Gastrocnemius medialis (tissue), 4 donors: ENCODE measurements at regions of chr1 and their contacts with region 1.

Region 1: DNA sequence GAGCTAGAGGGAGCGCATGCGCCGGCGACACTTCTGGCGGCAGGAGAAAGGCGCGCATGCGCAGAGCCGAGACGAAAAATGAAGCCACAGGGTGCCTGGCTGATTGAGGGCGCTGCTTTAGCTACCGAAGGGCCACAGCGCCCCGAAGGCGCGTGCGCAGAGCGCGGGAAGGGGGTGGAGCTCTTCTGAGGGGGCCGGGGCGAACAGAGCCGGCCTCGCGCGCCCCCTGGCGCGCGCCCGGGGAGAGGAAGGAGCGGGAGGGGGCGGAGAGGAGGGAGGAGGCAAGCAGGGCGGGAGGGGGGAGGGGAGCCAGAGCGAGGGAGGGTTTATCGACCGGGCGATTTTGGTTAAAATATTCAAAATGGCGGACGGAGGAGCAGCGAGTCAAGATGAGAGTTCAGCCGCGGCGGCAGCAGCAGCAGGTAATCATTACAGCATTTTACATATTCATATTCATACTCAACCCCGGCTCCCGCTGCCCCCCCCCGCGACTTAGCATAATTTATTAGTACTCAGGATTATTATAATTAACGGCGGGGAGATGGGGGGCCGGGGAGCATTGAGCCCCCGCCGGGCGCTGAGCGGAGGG is at the start of gene POU2F1:
- DNase-seq: peak; percentile 97 to 98
- ATAC-seq: peak; percentile 70 to 82
- H3K4me3 ChIP-seq: peak within 1 kb of the TSS; percentile 77 to 89 (median 84)
- H3K27ac ChIP-seq: peak within 1 kb of the TSS; percentile 94 to 99 (median 98)
- H3K4me1 ChIP-seq: peaks cover 36 to 42% of the 10 kb centered on the region in 2 donors
- H3K27me3 ChIP-seq: no peaks in the 10 kb centered on the region
- CTCF ChIP-seq: peak; percentile 19 to 85 (median 70)
- POLR2A ChIP-seq: peak; percentile 67 to 84
- total RNA-seq, gene POU2F1: 3.8 to 7.3 (median 4.8) TPM

Region 2: DNA sequence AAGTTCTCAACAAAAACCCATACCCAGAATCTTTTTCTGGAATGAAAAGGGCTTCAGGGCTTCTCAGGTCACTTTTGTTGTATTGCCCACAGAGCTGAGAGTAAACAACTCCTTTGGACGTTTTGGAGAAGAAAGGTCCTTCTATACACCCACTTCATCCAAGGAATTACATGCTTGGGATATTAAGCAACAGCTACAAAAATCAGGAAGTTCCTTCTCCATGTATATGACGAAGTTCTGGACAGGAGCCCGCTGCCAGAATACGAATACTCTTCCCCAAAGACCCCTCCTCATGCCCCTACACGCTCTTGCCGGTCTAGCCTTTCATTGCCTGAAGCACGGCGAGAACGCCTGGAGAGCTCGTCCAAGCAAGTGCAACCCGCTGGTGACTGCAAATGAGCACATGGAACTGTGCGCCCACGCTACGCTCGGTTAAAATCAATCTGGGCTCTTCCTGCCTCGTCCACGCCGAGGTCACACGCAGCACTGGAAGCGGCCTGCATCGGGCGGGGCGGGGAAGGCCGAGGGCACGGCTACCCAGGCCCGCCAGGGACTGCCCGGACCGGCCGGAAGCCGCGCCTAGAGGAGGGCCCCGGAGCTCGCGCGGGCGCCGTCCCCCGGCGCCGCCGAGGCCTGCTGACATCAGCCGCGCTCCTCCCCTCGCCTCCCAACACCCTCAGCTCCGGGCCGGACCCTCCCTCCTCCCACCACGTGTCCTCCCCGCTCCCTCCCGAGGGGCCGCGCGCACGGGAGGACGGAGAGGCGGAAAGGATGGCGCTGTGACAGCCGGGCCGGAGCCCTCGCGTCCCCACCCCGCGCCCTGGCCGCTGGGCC is 381.6 kb before region 1 on chr1 and contains the start of gene POGK:
- in situ Hi-C with region 1: no loop called
- intact Hi-C with region 1: loop called (anchors 1 kb)
- DNase-seq: peak; percentile 88 to 91
- ATAC-seq: peak; percentile 86 to 90
- H3K4me3 ChIP-seq: peak within 1 kb of the TSS; percentile 63 to 84 (median 68)
- H3K27ac ChIP-seq: peak within 1 kb of the TSS; percentile 83 to 99 (median 89)
- H3K4me1 ChIP-seq: peaks cover 49 to 50% of the 10 kb centered on the region in 2 donors
- H3K27me3 ChIP-seq: no peaks in the 10 kb centered on the region
- CTCF ChIP-seq: no peak
- POLR2A ChIP-seq: peak; percentile 78 to 84
- total RNA-seq, gene POGK: 6.6 to 9.6 (median 9.0) TPM

Region 3: DNA sequence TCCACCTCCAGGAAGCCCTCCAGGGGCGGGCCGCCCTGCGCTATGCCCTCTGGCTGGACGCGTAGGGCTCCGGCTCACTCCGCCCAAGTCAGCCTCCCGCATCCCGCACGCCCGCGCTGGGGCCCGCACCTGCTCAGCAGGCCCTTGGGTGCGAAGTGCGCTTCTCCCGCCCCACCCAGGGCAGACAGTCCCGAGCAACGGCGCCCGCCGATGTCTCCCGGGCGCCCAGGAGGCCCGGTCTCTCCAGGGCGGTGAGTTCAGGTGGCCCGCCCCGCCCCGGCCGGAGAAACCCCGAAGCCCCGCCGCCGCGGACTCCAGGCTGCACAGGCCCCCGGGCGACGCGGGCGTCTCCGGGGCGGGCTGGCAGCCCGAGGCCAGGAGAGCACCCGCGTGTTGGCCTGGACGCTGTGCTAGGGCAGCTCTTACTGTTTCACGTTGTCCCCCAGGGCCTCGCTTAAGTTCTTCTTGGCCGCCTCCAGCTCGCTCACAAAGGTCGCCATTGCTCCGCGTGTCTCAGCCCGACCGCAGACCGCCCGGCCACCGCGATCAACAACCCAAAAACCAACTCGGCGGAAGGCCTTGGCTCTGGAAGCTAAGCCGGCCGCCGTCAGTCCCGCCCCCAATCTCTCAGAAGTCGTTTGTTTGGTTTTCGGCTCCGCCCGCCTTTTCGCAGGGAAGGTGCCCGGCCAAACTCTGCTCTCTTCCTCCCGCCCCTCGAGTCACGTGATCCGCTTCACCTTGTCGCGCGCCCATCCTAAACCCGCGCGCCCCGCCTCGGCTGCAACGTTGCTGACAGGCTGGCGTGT is 344.7 kb before region 1 on chr1 and contains the start of gene TADA1:
- in situ Hi-C with region 1: no loop called
- intact Hi-C with region 1: loop called (anchors 2 kb)
- DNase-seq: peak; percentile 98 to 99
- ATAC-seq: peak; percentile 95 to 97
- H3K4me3 ChIP-seq: peak within 1 kb of the TSS; percentile 58 to 81 (median 74)
- H3K27ac ChIP-seq: peak within 1 kb of the TSS; percentile 84 to 94 (median 92)
- H3K4me1 ChIP-seq: peaks cover 12 to 33% of the 10 kb centered on the region in 2 donors
- H3K27me3 ChIP-seq: no peaks in the 10 kb centered on the region
- CTCF ChIP-seq: peak in 4 of 5 experiments; percentile 34 to 53 (median 48)
- POLR2A ChIP-seq: peak; percentile 70 to 88
- total RNA-seq, gene TADA1: 8.7 to 11.8 (median 10.0) TPM

Region 4: DNA sequence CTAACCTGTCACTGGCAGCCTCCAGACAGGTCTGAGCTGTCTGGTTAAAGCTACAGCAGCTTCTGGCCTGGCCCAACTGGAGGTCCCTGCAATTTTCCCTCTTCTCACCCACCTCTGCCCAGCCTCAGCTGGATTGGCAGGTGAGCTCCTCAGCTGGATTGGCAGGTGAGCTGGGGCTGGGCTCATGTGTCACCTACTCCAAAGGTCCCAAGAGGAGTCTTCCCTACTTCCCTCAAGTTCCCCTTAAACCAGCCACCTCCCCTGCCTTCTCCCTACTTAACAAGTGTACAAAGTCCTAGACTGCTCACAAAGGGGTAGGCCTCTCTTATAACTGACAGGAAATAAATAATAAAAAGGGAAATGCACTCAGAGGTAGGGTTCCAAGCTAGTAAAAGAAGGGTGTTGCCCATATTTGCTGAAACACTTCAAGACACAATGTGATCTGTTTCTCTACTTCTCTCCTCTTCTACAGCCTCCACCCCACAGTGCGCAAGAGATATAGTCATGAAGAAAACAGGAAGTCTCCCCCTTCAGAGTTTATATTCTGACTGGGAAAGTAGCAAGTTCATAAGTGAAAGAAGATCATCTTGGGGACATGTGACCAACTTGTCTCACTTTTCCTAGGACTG is 130.2 kb before region 1 on chr1 and contains the start of gene GPA33:
- in situ Hi-C with region 1: no loop called
- intact Hi-C with region 1: loop called (anchors 2 kb)
- DNase-seq: no peak
- ATAC-seq: no peak
- H3K4me3 ChIP-seq: no peak within 1 kb of the TSS
- H3K27ac ChIP-seq: peak within 1 kb of the TSS; percentile 21 to 48 (median 34)
- H3K4me1 ChIP-seq: peaks cover 31 to 49% of the 10 kb centered on the region in 2 donors
- H3K27me3 ChIP-seq: no peaks in the 10 kb centered on the region
- CTCF ChIP-seq: no peak
- POLR2A ChIP-seq: no peak
- total RNA-seq, gene GPA33: 1.9 TPM in 1 of 4 donors, not detected in the others

Region 5: DNA sequence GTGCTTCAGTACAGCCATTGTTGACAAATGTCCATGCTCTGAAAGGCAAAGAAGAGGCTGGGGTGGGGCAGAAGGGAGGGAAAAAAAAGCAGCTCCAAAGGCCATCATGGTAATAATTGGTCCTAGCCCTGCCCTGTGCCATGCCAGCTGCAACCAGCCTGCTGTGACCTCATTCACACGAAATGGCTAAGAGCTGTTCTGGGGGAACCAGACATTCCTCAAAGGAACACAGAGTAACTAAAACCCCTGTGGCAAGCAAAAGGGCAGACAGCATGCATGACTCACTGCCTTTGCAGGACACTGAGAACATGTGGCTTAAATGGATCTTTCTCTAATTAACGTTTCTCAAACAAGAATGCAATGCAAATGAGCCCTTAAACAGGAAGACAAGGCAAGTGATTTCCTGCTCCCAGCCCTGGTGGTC is 84.4 kb before region 1 on chr1:
- in situ Hi-C with region 1: no loop called
- intact Hi-C with region 1: loop called (anchors 2 kb)
- DNase-seq: peak; percentile 81 to 87
- ATAC-seq: peak; percentile 92 to 96
- H3K4me3 ChIP-seq: no peak overlapping the region
- H3K27ac ChIP-seq: peak overlapping the region; percentile 68 to 88 (median 80)
- H3K4me1 ChIP-seq: peaks cover 21 to 59% of the 10 kb centered on the region in 2 donors
- H3K27me3 ChIP-seq: no peaks in the 10 kb centered on the region
- CTCF ChIP-seq: no peak
- POLR2A ChIP-seq: no peak

Region 6: DNA sequence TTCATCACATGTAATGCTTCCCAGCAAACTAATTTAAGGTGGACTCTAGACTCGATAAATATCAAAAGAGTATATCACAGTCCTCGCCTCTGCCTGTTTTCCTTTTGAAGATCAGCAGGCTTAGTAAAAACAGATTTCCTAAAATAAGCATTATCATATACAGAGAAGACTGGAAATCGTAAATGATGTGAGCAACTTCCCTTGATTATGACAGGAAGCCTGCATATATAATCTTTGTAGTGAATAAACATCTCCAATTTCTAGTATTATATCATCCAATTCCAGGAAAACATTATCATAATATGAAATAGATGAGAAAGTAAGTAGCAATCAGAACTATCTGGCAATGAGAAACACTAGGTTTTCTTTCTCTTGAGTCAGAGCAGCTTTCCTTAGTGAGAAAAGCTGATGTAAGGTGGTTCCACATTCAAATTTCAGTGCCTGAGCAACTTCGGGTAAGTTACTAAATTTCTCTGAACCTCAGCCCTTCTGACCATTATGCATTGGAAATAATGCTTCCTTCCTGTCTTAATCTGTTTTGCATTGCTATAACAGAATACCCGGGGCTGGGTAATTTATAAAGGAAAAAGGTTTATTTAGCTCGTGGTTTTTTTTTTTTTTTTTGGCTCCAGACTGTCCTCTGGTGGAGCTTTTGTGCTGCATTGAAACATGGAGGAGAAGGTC is 12.5 kb before region 1 on chr1:
- in situ Hi-C with region 1: no loop called
- intact Hi-C with region 1: no loop called
- DNase-seq: no peak
- ATAC-seq: peak in 1 of 2 donors; percentile 41
- H3K4me3 ChIP-seq: no peak overlapping the region
- H3K27ac ChIP-seq: no peak overlapping the region
- H3K4me1 ChIP-seq: no peaks in the 10 kb centered on the region
- H3K27me3 ChIP-seq: no peaks in the 10 kb centered on the region
- CTCF ChIP-seq: peak in 3 of 5 experiments; percentile 32 to 39 (median 39)
- POLR2A ChIP-seq: no peak

Region 7: GRCh38 chr1:167491586-167492461 is 271.2 kb after region 1 on chr1:
- in situ Hi-C with region 1: no loop called
- intact Hi-C with region 1: no loop called
- DNase-seq: no peak
- ATAC-seq: no peak
- H3K4me3 ChIP-seq: no peak overlapping the region
- H3K27ac ChIP-seq: no peak overlapping the region
- H3K4me1 ChIP-seq: no peaks in the 10 kb centered on the region
- H3K27me3 ChIP-seq: no peaks in the 10 kb centered on the region
- CTCF ChIP-seq: no peak
- POLR2A ChIP-seq: no peak

Region 8: DNA sequence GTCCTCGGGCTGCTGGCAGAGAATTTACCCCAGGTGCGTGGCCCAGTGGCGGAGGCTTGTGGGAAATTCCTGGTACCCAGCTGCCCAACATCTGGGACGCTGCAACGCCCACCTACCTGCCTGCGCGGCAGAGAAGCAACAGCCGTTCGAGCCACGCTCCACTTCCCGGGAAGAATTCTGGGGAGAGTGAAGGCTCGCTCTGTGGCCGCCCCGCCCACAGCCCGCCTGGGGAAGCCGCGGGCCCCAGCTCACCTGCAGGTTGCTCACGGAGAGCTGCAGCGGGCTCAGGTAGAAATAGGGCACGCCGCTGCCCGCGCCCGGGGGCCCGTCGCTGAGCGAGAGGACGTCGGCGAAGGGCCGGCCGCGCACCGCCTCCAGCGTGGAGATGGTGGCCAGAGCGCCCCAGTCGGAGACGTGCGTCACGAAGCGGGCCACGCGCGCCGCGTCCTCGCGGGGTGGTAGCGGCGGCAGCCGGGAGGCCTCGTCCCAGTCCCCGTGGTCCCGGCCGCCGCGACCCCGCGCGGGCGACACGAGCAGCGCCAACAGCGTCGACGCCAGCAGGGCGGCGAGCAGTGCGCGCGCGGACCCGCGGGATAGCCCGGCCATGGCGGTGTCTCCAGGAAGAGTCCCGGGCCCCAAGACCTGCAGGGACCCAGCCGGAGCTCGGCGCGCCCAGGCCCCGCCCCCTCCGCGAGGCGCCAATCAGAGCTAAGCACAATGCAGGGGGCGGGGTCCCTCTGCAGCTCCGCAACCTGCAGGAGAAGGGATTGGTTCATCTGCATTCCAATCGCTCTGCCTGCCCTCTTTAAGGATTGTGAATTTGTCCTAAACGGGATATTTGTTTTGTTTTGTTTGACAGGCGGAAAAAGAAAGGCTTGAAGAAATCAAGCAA is 332.8 kb after region 1 on chr1 and contains the start of gene CREG1:
- in situ Hi-C with region 1: no loop called
- intact Hi-C with region 1: loop called (anchors 2 kb)
- DNase-seq: peak; percentile 90 to 94
- ATAC-seq: peak; percentile 88 to 91
- H3K4me3 ChIP-seq: peak within 1 kb of the TSS; percentile 66 to 89 (median 74)
- H3K27ac ChIP-seq: peak within 1 kb of the TSS; percentile 66 to 91 (median 82)
- H3K4me1 ChIP-seq: peaks cover 35 to 49% of the 10 kb centered on the region in 2 donors
- H3K27me3 ChIP-seq: no peaks in the 10 kb centered on the region
- CTCF ChIP-seq: peak in 1 of 5 experiments; percentile 14
- POLR2A ChIP-seq: peak; percentile 95 to 96
- total RNA-seq, gene CREG1: 69.9 to 99.6 (median 80.7) TPM